Ovary (tissue), 10 donors: ENCODE measurements at regions of chrX and their contacts with region 1.

Region 1: DNA sequence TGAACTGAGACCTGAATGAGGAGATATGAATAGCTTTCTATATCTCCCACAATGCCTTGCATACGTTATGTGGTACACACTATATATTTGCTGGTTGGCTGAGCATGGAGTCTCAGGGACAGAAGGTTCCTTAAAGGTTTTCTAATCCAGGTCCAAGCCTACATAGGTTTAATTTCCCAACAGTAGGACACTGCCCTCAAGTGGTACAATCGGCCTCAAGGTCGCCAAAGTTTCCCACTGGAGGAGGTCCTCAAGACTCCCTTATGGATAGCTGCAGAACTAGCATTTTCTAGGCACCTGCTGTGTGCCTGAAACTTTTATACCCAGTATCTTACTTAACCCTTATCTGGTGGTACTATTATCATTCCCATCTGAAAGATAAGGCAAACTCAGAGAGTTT is 21.0 kb upstream of the EFNB1 start:
- DNase-seq: no peak
- H3K4me3 ChIP-seq: no peak overlapping the region
- H3K27ac ChIP-seq: no peak overlapping the region
- H3K4me1 ChIP-seq: no peaks in the 10 kb centered on the region
- H3K27me3 ChIP-seq: no peaks in the 10 kb centered on the region
- CTCF ChIP-seq: no peak
- EP300 ChIP-seq: no peak
- POLR2A ChIP-seq: no peak

Region 2: GRCh38 chrX:68732906-68733493 is 74.8 kb before region 1 on chrX:
- intact Hi-C with region 1: loop called in 1 of 4 experiments (anchors 10 kb)
- DNase-seq: peak; percentile 26 to 80 (median 46)
- H3K4me3 ChIP-seq: no peak overlapping the region
- H3K27ac ChIP-seq: no peak overlapping the region
- H3K4me1 ChIP-seq: no peaks in the 10 kb centered on the region
- H3K27me3 ChIP-seq: no peaks in the 10 kb centered on the region
- CTCF ChIP-seq: no peak
- EP300 ChIP-seq: no peak
- POLR2A ChIP-seq: no peak

Region 3: DNA sequence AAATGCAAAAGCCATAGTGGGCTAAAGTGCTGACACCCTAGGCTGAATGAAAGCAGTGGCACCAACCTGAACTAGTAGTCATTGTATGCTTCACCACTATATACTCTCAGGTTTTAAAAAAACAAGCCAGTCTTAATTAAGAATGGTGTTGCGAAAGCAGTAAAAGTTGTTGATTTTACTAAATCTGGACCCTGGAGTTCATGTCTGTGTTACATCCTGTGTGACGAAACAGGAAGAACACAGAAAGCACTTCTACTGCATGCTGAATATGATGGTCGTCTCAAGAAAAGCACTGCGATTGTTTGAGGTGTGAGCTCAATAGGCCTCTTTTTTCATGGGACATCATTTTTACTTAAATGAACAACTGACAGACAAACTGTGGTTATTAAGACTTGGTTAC is 1591.1 kb after region 1 on chrX:
- intact Hi-C with region 1: no loop called
- DNase-seq: no peak
- H3K4me3 ChIP-seq: no peak overlapping the region
- H3K27ac ChIP-seq: no peak overlapping the region
- H3K4me1 ChIP-seq: no peaks in the 10 kb centered on the region
- H3K27me3 ChIP-seq: no peaks in the 10 kb centered on the region
- CTCF ChIP-seq: no peak
- EP300 ChIP-seq: no peak
- POLR2A ChIP-seq: no peak